ENCODE measurements at regions of chr11 and their contacts with region 1.

Region 1: GRCh38 chr11:114439229-114440120 is at the start of gene REXO2:
- DNase-seq: peak; percentile 96
- H3K4me3 ChIP-seq: peak within 1 kb of the TSS; percentile 49 to 97 (median 83)
- H3K27ac ChIP-seq: peak within 1 kb of the TSS; percentile 36
- H3K4me1 ChIP-seq: peaks cover 23% of the 10 kb centered on the region
- H3K27me3 ChIP-seq: no peaks in the 10 kb centered on the region
- CTCF ChIP-seq: peak in 1 of 2 donors; percentile 43
- POLR2A ChIP-seq: peak; percentile 83
- total RNA-seq, gene REXO2: 155 and 182 TPM in 2 replicates

Region 2: DNA sequence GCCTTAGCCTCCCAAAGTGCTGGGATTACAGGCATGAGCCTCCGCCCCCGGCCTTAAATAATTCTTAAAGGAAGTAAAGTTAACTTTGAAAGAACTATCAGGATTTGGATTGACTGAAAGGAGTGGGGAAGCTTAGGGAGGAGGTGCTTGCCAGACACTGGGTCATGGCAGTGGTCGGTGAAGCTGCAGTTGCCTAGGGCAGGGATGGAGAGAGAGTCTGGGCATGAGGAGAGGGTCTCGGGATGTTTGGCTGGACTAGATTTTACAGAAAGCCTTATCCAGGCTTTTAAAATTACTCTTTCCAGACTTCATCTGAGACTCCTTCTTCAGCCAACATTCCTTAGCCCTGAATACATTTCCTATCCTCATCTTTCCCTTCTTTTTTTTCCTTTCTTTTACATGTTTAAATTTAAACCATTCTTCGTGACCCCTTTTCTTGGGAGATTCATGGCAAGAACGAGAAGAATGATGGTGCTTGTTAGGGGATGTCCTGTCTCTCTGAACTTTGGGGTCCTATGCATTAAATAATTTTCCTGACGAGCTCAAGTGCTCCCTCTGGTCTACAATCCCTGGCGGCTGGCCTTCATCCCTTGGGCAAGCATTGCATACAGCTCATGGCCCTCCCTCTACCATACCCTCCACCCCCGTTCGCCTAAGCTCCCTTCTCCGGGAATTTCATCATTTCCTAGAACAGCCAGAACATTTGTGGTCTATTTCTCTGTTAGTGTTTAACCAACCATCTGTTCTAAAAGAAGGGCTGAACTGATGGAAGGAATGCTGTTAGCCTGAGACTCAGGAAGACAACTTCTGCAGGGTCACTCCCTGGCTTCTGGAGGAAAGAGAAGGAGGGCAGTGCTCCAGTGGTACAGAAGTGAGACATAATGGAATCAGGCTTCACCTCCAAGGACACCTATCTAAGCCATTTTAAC is 143.5 kb before region 1 on chr11 and contains the start of gene NNMT:
- CTCF ChIA-PET with region 1: no interaction called
- POLR2A ChIA-PET with region 1: no interaction called
- dilution Hi-C with region 1: no loop called
- intact Hi-C with region 1: loop called (anchors 1 kb)
- DNase-seq: peak; percentile 97
- H3K4me3 ChIP-seq: peak within 1 kb of the TSS; percentile 85 to 99 (median 96)
- H3K27ac ChIP-seq: peak within 1 kb of the TSS; percentile 100
- H3K4me1 ChIP-seq: peaks cover 70% of the 10 kb centered on the region
- H3K27me3 ChIP-seq: no peaks in the 10 kb centered on the region
- CTCF ChIP-seq: peak in 1 of 2 donors; percentile 11
- POLR2A ChIP-seq: peak; percentile 86
- total RNA-seq, gene NNMT: 300 and 330 TPM in 2 replicates

Region 3: GRCh38 chr11:114563077-114563476 is 123.6 kb after region 1 on chr11:
- CTCF ChIA-PET with region 1: no interaction called
- POLR2A ChIA-PET with region 1: no interaction called
- dilution Hi-C with region 1: no loop called
- intact Hi-C with region 1: loop called (anchors 2 kb)
- DNase-seq: peak; percentile 51
- H3K4me3 ChIP-seq: peak overlapping the region in 1 of 3 experiments; percentile 23
- H3K27ac ChIP-seq: peak overlapping the region; percentile 35
- H3K4me1 ChIP-seq: peaks cover 20% of the 10 kb centered on the region
- H3K27me3 ChIP-seq: no peaks in the 10 kb centered on the region
- CTCF ChIP-seq: no peak
- POLR2A ChIP-seq: no peak